GM12878 (cell line): ENCODE measurements at regions of chr2 and their contacts with region 1.

Region 1: GRCh38 chr2:9555297-9556141 is at the start of gene ADAM17:
- DNase-seq: peak; percentile 78
- ATAC-seq: peak; percentile 91
- H3K4me3 ChIP-seq: peak within 1 kb of the TSS; percentile 99
- H3K27ac ChIP-seq: peak within 1 kb of the TSS; percentile 87
- H3K4me1 ChIP-seq: peaks cover 14% of the 10 kb centered on the region
- H3K27me3 ChIP-seq: no peaks in the 10 kb centered on the region
- CTCF ChIP-seq: peak; percentile 43 to 48 (median 47); a peak in 5 of 6 replicates
- EP300 ChIP-seq: peak in 1 of 2 experiments; percentile 40; a peak in 1 of 4 replicates
- POLR2A ChIP-seq: peak; percentile 96
- RAD21 ChIP-seq: peak; percentile 20; the same call in 1 of the 2 replicates
- polyA plus RNA-seq, gene ADAM17: 2.3 to 3.4 TPM

Region 2: GRCh38 chr2:9474361-9474967 is 81.1 kb before region 1 on chr2 and contains the start of gene IAH1:
- CTCF ChIA-PET with region 1: interaction called, 17 read pairs
- POLR2A ChIA-PET with region 1: interaction called, 10 read pairs
- RAD21 ChIA-PET with region 1: interaction called, 20 read pairs
- SMC1A ChIA-PET with region 1: interaction called, 10 read pairs
- in situ Hi-C with region 1: no loop called
- intact Hi-C with region 1: no loop called
- DNase-seq: no peak
- ATAC-seq: peak; percentile 88
- H3K4me3 ChIP-seq: peak within 1 kb of the TSS; percentile 67
- H3K27ac ChIP-seq: peak within 1 kb of the TSS; percentile 90
- H3K4me1 ChIP-seq: peaks cover 12% of the 10 kb centered on the region; the same call in 1 of the 2 replicates
- H3K27me3 ChIP-seq: no peaks in the 10 kb centered on the region
- CTCF ChIP-seq: no peak; a peak in 1 of 6 replicates
- EP300 ChIP-seq: no peak
- POLR2A ChIP-seq: peak; percentile 87
- RAD21 ChIP-seq: no peak
- polyA plus RNA-seq, gene IAH1: 120 to 125 TPM

Region 3: GRCh38 chr2:9488583-9489547 is 66.7 kb before region 1 on chr2:
- CTCF ChIA-PET with region 1: no interaction called
- POLR2A ChIA-PET with region 1: no interaction called
- RAD21 ChIA-PET with region 1: no interaction called
- SMC1A ChIA-PET with region 1: no interaction called
- in situ Hi-C with region 1: no loop called
- intact Hi-C with region 1: no loop called
- DNase-seq: no peak
- ATAC-seq: no peak
- H3K4me3 ChIP-seq: no peak overlapping the region
- H3K27ac ChIP-seq: no peak overlapping the region
- H3K4me1 ChIP-seq: no peaks in the 10 kb centered on the region
- H3K27me3 ChIP-seq: no peaks in the 10 kb centered on the region
- CTCF ChIP-seq: no peak
- EP300 ChIP-seq: no peak
- POLR2A ChIP-seq: no peak
- RAD21 ChIP-seq: no peak

Region 4: DNA sequence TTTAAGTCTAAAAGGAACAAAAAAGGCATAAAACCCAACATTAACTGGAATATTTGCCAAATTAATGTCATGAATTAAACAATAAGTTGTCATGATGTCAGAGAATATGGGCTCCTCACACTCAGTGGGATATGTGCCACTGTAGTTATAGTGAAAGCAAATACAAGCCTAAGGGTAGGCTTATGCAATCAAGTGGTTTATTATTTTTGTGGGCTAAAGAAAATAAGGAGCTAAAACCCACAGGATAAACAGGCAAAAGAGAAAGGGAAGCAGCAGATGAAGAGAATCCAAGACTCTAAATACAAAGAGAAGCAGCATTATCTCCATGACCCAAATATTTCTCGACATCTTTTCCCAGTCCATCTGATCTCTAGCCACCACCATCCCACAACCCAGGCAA is 57.8 kb after region 1 on chr2:
- CTCF ChIA-PET with region 1: interaction called, 5 read pairs
- POLR2A ChIA-PET with region 1: interaction called, 11 read pairs
- RAD21 ChIA-PET with region 1: interaction called, 12 read pairs
- SMC1A ChIA-PET with region 1: interaction called, 11 read pairs
- in situ Hi-C with region 1: no loop called
- intact Hi-C with region 1: no loop called
- DNase-seq: no peak
- ATAC-seq: no peak
- H3K4me3 ChIP-seq: no peak overlapping the region
- H3K27ac ChIP-seq: no peak overlapping the region
- H3K4me1 ChIP-seq: peaks cover 6% of the 10 kb centered on the region; the same call in 1 of the 2 replicates
- H3K27me3 ChIP-seq: no peaks in the 10 kb centered on the region
- CTCF ChIP-seq: no peak
- EP300 ChIP-seq: no peak
- POLR2A ChIP-seq: no peak
- RAD21 ChIP-seq: no peak

Region 5: GRCh38 chr2:9656270-9656766 is 100.8 kb after region 1 on chr2:
- CTCF ChIA-PET with region 1: interaction called, 3 read pairs
- POLR2A ChIA-PET with region 1: interaction called, 7 read pairs
- RAD21 ChIA-PET with region 1: no interaction called
- SMC1A ChIA-PET with region 1: interaction called, 3 read pairs
- in situ Hi-C with region 1: no loop called
- intact Hi-C with region 1: loop called (anchors 5 kb)
- DNase-seq: peak; percentile 95
- ATAC-seq: peak; percentile 94
- H3K4me3 ChIP-seq: peak overlapping the region; percentile 60
- H3K27ac ChIP-seq: peak overlapping the region; percentile 62
- H3K4me1 ChIP-seq: peaks cover 42% of the 10 kb centered on the region
- H3K27me3 ChIP-seq: no peaks in the 10 kb centered on the region
- CTCF ChIP-seq: no peak
- EP300 ChIP-seq: peak; percentile 93 to 97
- POLR2A ChIP-seq: peak; percentile 30; the same call in 1 of the 2 replicates
- RAD21 ChIP-seq: peak; percentile 39

Region 6: GRCh38 chr2:9799665-9800632 is 244.4 kb after region 1 on chr2:
- CTCF ChIA-PET with region 1: interaction called, 11 read pairs
- POLR2A ChIA-PET with region 1: interaction called, 3 read pairs
- RAD21 ChIA-PET with region 1: no interaction called
- SMC1A ChIA-PET with region 1: interaction called, 3 read pairs
- in situ Hi-C with region 1: no loop called
- intact Hi-C with region 1: no loop called
- DNase-seq: peak; percentile 47
- ATAC-seq: peak; percentile 93
- H3K4me3 ChIP-seq: no peak overlapping the region; the same call in 1 of the 2 replicates
- H3K27ac ChIP-seq: no peak overlapping the region
- H3K4me1 ChIP-seq: peaks cover 11% of the 10 kb centered on the region
- H3K27me3 ChIP-seq: no peaks in the 10 kb centered on the region; a peak in 1 of 4 replicates
- CTCF ChIP-seq: peak; percentile 97 to 100 (median 98)
- EP300 ChIP-seq: no peak
- POLR2A ChIP-seq: no peak
- RAD21 ChIP-seq: peak; percentile 84